Pancreas (tissue), 10 donors: ENCODE measurements at regions of chr17 and their contacts with region 1.

Region 1: GRCh38 chr17:385926-386876 is 33.6 kb upstream of the RPH3AL start:
- DNase-seq: peak; percentile 70 to 98 (median 88)
- ATAC-seq: peak; percentile 83 to 95 (median 88)
- H3K4me3 ChIP-seq: peak overlapping the region; percentile 37 to 60 (median 44)
- H3K27ac ChIP-seq: peak overlapping the region in 3 of 4 donors; percentile 39 to 52 (median 50)
- H3K4me1 ChIP-seq: peaks cover 0 to 10% (median 0%) of the 10 kb centered on the region in 3 donors
- H3K27me3 ChIP-seq: no peaks in the 10 kb centered on the region
- CTCF ChIP-seq: peak; percentile 47 to 68 (median 62)

Region 2: DNA sequence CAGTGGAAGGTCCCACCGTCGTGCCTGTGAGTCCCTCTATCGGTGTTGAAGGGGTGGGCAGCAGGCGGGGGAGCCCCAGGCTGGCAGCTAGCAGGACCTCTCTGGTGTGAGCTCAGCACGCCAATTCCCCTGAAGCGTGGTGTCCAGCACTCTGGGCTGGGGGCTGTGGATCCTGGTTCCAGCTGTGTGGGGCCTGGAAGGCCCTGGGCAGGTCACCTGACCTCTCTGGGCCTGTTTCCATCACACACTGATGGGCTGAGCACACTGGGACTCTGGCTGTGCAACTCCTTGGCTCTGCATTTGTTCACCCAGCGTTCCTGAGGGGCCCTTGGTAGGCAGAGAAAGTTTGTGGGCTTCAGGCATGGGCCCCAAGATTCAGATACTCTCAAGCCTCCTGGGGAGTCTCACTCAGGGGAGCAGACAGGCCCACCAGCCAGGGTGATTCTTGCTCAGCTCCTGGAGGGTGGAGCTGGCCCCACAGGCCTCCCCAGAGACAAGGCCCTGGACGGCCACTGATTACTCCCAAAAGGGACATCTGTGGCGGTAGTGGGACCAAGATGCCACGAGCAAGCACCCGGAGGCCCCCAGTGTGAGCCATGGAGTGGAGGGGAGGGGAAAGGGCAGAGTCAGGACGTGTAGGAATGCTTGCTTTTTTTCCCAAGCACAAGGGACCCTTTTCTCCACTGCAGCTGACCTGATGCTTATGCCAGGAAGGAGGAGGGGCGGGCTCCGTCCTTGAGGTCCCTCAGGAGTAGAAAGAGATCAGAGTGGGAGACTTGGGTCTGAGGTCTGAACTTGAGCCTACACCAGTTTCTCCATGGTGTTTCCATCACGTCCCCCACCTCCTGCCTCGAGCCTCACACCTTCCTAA is 240.3 kb before region 1 on chr17:
- intact Hi-C with region 1: loop called in 1 of 3 experiments (anchors 5 kb)
- DNase-seq: peak; percentile 7 to 61 (median 21)
- ATAC-seq: peak in 1 of 4 donors; percentile 12
- H3K4me3 ChIP-seq: no peak overlapping the region
- H3K27ac ChIP-seq: no peak overlapping the region
- H3K4me1 ChIP-seq: no peaks in the 10 kb centered on the region
- H3K27me3 ChIP-seq: no peaks in the 10 kb centered on the region
- CTCF ChIP-seq: no peak

Region 3: DNA sequence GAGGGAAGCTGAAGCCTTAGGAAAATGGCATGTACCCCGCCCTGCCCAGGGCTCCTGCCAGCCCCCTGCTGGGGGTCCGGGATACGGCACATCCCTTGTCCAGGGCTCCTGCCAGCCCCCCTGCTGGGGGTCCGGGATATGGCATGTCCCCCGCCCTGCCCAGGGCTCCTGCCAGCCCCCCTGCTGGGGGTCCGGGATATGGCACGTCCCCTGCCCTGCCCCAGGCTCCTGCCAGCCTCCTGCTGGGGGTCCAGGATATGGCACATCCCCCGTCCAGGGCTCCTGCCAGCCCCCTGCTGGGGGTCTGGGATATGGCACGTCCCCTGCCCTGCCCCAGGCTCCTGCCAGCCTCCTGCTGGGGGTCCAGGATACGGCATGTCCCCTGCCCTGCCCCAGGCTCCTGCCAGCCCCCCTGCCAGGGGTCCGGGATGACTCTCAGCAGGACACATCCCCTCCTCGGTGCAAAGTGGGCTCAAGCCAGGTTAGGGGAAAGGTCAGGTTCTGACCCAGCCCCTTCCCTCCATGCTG is 76.8 kb before region 1 on chr17:
- intact Hi-C with region 1: loop called in 1 of 3 experiments (anchors 10 kb)
- DNase-seq: peak in 4 of 6 donors; percentile 14 to 75 (median 44)
- ATAC-seq: peak in 1 of 4 donors; percentile 4
- H3K4me3 ChIP-seq: no peak overlapping the region
- H3K27ac ChIP-seq: no peak overlapping the region
- H3K4me1 ChIP-seq: no peaks in the 10 kb centered on the region
- H3K27me3 ChIP-seq: no peaks in the 10 kb centered on the region
- CTCF ChIP-seq: peak in 3 of 4 donors; percentile 6 to 21 (median 19)

Region 4: DNA sequence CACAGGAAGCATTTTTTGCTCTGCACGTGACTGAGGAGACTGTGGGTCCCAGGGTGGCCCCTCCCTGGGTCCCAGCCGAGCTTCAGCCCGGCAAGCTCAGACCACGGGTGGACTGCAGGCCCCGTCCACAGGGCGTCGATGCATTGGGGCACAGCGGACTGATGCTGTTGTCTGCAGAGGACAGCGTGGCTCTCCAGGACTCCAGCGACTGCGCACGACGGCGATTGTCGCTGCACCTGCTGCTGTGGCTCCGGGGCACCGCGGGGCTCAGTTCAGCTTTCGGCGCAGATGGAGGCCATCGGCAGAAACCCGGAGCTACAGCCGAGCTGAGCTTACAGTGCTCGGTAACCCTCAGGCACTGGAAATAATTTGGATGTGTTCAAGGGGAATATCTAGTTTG is 54.9 kb after region 1 on chr17:
- intact Hi-C with region 1: no loop called
- DNase-seq: peak in 1 of 6 donors; percentile 46
- ATAC-seq: no peak
- H3K4me3 ChIP-seq: no peak overlapping the region
- H3K27ac ChIP-seq: no peak overlapping the region
- H3K4me1 ChIP-seq: no peaks in the 10 kb centered on the region
- H3K27me3 ChIP-seq: no peaks in the 10 kb centered on the region
- CTCF ChIP-seq: no peak